ENCODE measurements at regions of chr1 and their contacts with region 1.

Region 1: DNA sequence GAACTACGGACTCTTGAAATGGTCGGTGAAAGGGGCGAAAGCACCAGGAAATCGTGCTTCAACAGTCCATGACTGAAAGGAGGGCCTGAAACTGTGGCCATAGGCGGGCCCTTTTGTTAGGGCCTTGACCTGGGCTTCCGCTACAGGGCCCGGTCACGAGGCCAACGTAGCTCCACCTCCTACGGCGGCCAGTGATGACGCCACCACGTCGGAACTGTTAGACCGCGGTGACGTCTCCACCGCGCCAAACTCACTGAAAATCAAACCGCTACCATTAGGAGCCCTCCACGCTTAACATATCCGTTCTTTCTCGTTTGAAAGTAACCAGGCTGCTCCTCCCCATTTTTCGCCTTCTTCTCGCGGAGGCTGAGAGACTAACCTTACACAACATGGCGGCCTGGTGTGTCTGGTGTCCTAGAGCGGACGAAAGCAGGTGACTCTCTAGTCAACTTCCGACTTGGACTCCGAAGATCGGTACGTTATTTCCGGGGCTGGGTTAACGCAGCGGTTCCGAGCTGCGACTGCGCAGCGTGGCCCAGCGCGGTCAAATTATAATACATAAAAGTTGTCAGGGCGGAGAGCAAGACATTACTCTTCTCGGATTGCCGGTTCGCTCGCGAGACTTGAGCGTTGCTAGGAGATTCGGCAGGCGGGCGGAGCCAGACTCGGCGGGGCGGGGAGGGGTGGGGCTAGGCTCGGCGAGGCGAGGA is 376 bp upstream of the CACYBP start:
- DNase-seq: peak; percentile 98
- H3K4me3 Mint-ChIP-seq: no peak overlapping the region
- H3K27ac Mint-ChIP-seq: no peak overlapping the region
- H3K4me1 Mint-ChIP-seq: peaks cover 49% of the 10 kb centered on the region
- H3K27me3 Mint-ChIP-seq: no peaks in the 10 kb centered on the region

Region 2: DNA sequence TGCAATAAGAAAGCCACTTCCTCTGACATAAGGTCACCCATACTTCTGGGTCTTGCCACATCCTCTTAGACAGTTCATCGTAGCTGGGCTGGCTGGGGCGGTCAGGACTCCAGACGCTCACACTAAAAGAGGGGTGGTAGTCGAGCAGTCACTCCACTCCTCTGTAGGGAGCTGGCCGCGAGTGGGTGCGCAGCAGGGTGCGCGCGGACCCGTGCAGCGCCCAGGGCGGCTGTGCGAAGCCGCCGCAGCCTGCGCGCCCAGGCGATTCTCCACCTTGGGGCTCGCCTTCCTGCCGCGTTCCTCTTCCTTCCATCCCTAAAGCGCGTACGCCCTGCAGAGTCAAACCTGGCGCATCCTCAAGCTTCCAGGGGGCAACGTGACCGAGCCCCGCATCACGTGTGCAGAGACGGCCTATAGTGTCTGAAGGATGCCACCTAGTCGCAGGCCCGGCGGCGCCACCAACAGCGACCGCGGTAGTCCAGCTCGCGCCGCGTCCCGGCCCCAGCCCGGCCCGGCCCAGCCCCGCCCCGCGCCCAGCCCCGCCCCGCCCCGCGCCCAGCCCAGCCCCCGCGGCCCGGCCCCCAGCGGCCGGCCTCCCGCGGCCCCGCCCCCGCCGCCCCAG is 1522.6 kb before region 1 on chr1:
- CTCF ChIA-PET with region 1: no interaction called
- POLR2A ChIA-PET with region 1: no interaction called
- intact Hi-C with region 1: loop called (anchors 10 kb)
- DNase-seq: peak; percentile 90
- H3K4me3 Mint-ChIP-seq: peak overlapping the region; percentile 84
- H3K27ac Mint-ChIP-seq: peak overlapping the region; percentile 90
- H3K4me1 Mint-ChIP-seq: peaks cover 53% of the 10 kb centered on the region
- H3K27me3 Mint-ChIP-seq: no peaks in the 10 kb centered on the region

Region 3: DNA sequence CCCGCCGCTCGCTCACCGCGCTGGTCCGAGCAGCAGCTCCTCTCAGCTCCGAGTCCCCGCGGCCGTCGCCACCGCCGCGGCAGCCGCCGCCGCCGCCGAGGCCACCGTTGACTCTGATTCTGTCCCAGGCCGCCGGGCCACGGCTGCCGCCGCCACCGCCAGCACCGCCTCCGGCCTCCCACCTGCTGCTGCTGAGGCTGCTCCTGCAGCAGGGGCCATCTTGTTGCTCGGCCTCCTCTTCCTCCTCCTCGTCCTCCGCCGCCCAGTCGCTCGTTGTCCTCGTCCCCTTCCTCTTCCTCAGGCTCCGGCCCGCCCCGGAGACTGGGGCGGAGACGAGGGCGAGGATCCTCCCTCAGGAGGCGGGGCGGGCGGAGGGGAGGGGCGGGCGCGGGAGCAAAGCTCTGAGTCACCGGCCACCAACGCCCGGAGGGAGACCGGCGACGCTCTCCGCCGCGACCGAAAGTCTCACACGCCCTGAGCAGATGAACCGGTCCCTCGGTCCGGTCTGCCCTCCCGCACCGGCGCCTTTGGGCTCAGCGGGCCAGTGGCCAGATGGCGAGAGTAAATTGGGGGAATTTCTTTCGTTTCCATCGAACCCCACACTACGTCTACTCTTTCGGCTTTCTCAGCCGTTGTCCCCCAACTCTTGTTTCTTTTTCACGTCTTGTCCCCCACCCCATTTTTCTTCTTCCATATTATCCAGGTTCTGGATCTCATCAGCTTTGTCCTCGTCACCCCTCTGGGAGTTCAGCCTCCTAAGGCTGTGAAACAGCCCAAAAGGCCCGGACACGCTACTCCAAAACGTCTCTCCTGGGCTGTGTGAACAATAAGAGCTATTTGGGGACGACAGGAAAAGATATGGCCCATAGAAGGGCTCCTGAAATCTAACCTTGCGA is 977.0 kb before region 1 on chr1 and contains the start of gene RC3H1:
- CTCF ChIA-PET with region 1: no interaction called
- POLR2A ChIA-PET with region 1: no interaction called
- intact Hi-C with region 1: loop called (anchors 5 kb)
- DNase-seq: peak; percentile 94
- H3K4me3 Mint-ChIP-seq: peak within 1 kb of the TSS; percentile 97
- H3K27ac Mint-ChIP-seq: peak within 1 kb of the TSS; percentile 93
- H3K4me1 Mint-ChIP-seq: peaks cover 38% of the 10 kb centered on the region
- H3K27me3 Mint-ChIP-seq: no peaks in the 10 kb centered on the region
- total RNA-seq, gene RC3H1: 26.6 to 26.8 TPM

Region 4: DNA sequence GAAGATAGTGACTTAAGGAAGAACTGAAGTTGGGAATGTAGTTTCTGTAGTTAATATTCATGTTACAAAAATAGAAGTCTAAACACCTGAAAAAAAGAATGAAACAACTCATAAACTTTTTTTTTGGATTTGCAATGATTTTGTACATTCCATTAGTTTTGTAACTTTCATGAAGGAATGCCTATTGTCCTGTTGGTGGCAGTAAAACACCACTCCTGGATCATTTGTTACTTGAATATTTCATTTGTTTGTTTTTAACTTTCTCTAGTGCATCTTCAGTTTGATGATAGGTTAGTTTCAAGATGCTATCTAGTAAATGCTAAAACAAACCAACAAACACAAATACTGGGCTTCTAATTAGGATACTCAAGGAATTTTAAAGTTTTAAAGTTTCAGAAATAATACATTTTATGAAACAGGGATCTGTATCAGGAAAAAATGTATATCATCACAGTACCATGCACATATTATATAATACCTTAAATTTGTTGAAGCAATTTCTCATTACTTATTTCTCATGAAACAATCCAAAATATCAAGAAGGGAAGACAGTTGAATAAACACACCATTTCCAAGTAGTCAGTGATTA is 229.3 kb before region 1 on chr1:
- CTCF ChIA-PET with region 1: interaction called, 13 read pairs
- POLR2A ChIA-PET with region 1: no interaction called
- intact Hi-C with region 1: loop called (anchors 1 kb)
- DNase-seq: no peak
- H3K4me3 Mint-ChIP-seq: no peak overlapping the region
- H3K27ac Mint-ChIP-seq: no peak overlapping the region
- H3K4me1 Mint-ChIP-seq: peaks cover 5% of the 10 kb centered on the region
- H3K27me3 Mint-ChIP-seq: no peaks in the 10 kb centered on the region

Region 5: DNA sequence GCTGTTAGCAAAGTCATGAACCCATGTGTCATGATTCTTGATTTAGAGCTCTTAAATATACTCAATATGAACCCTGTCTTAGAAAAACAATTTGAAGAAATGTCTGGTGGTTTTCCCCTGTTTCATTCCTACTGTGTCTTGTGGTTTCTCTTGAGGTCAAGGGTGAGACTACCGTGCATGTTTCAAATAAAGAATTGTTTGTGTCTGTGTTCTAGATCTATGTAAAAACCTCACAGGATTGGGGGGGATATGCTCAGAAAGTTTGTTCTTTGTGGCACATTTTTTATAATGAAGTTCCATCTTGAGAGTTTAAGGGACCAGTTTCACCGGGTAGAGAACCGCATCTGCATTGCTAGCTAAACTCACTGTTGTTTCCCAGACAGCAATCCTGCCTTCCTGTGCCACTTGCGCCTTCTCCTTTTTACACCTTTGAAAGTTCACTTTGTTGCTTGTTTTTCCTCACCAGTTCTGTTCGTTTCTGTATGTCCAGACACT is 30.6 kb before region 1 on chr1:
- CTCF ChIA-PET with region 1: interaction called, 7 read pairs
- POLR2A ChIA-PET with region 1: interaction called, 16 read pairs
- intact Hi-C with region 1: loop called (anchors 1 kb)
- DNase-seq: peak; percentile 26
- H3K4me3 Mint-ChIP-seq: peak overlapping the region; percentile 68
- H3K27ac Mint-ChIP-seq: peak overlapping the region; percentile 90
- H3K4me1 Mint-ChIP-seq: peaks cover 75% of the 10 kb centered on the region
- H3K27me3 Mint-ChIP-seq: no peaks in the 10 kb centered on the region

Region 6: GRCh38 chr1:175023043-175023921 is 23.9 kb after region 1 on chr1 and contains the start of gene MRPS14:
- CTCF ChIA-PET with region 1: interaction called, 9 read pairs
- POLR2A ChIA-PET with region 1: interaction called, 50 read pairs
- intact Hi-C with region 1: loop called (anchors 1 kb)
- DNase-seq: peak; percentile 99
- H3K4me3 Mint-ChIP-seq: peak within 1 kb of the TSS; percentile 94
- H3K27ac Mint-ChIP-seq: peak within 1 kb of the TSS; percentile 88
- H3K4me1 Mint-ChIP-seq: peaks cover 24% of the 10 kb centered on the region
- H3K27me3 Mint-ChIP-seq: no peaks in the 10 kb centered on the region
- total RNA-seq, gene MRPS14: 44.7 to 47.6 TPM

Region 7: DNA sequence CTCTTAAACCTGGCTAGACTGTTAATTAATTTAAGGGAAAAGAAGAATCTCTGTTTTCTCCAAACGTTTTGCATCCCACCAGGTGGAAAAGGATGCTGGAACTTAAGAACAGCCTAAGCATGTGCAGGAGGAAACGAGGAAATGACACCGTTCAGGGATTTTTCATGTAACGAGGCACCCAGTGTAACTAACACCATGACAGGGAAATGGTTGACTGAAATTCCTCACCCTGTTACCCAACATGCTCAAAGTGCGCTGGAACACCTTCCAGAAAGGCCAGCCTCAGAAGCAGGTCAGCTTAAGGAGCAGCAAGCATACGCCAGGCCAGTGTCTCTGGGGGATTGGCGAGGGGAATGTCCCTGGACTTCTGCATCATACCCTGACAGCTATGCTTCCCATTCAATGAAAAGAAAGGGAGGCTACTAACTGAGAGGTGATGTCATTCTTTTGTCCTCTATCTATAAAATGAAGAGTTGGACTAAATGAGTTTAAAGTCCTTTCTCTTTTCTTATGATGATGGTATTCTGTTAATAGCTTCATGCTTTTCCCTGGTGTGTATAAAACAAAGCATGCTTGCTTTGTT is 89.9 kb after region 1 on chr1:
- CTCF ChIA-PET with region 1: no interaction called
- POLR2A ChIA-PET with region 1: no interaction called
- intact Hi-C with region 1: no loop called
- DNase-seq: no peak
- H3K4me3 Mint-ChIP-seq: no peak overlapping the region
- H3K27ac Mint-ChIP-seq: no peak overlapping the region
- H3K4me1 Mint-ChIP-seq: no peaks in the 10 kb centered on the region
- H3K27me3 Mint-ChIP-seq: peaks cover 2% of the 10 kb centered on the region